ENCODE measurements at regions of chr14 and their contacts with region 1.

Region 1: DNA sequence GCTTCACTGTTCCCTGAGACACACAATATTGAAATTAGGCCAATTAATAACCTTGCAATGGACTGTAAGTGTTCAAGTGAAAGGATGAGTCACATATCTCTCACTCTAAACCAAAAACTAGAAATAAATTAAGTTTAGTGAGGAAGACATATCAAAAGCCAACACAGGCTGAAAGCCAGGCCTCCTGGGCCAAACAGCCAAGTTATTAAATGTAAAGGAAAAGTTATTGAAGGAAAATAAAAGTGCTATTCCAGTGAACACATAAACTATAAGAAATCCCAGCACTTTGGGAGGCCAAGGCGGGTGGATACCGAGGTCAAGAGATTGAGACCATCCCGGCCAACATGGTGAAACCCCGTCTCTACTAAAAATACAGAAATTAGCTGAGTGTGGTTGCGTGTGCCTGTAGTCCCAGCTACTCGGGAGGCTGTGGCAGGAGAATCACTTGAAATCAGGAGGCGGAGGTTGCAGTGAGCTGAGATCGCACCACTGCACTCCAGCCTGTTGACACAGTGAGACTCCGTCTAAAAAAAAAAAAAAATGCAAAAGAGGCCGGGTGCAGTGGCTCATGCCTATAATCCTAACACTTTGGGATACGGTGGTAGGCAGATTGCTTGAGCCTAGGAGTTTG is 10.4 kb upstream of the HEATR5A start:
- DNase-seq: no peak
- H3K4me3 ChIP-seq: no peak overlapping the region
- H3K27ac ChIP-seq: no peak overlapping the region
- H3K4me1 ChIP-seq: no peaks in the 10 kb centered on the region
- CTCF ChIP-seq: no peak

Region 2: DNA sequence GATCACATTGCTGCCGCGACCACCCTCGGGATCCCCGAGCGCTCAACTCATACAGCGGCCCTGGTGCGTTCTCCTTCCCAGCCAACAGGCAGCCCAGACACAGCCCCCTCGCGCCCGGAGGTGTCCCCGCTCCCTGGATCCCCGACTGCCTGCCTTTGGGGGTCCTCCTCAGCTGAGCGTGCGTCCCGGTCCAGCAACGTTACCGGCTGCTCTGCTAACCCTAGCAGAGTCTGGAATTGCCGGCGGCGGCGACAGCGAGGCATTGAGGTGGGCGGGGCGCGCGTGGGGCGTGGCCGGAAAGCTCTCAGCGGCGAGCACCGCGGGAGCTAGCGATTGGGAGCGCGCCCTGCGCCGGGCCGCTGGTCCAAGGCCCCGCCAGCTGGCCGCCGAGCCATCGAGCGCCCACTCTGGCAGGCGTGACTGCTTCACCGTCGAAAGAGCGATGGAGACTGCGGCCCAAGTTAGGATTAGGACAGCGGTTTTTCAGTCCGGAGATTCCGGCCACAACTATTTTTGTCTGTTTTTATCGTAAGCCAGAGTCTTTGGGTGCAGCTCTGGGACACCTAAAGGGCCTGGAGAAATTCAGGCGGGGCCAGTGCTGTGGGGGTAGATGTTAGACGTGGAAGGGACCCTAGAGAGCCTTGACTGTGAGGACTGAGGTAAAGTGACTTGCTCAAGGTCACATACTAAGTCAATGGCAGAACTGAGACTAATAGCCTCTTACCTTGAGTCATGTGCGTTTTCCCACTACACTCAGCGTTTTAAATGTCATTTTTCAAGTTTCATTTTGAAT is 10.2 kb before region 1 on chr14 and contains the start of gene HEATR5A:
- CTCF ChIA-PET with region 1: no interaction called
- POLR2A ChIA-PET with region 1: interaction called, 7 read pairs
- intact Hi-C with region 1: loop called (anchors 1 kb)
- DNase-seq: peak; percentile 95
- H3K4me3 ChIP-seq: peak within 1 kb of the TSS; percentile 79
- H3K27ac ChIP-seq: peak within 1 kb of the TSS; percentile 36
- H3K4me1 ChIP-seq: peaks cover 16% of the 10 kb centered on the region
- CTCF ChIP-seq: peak; percentile 54
- total RNA-seq, gene HEATR5A: 12.0 and 13.7 TPM in 2 replicates

Measured in OCI-LY7 (cell line).